HepG2 (cell line): ENCODE measurements at regions of chr11 and their contacts with region 1.

Region 1: DNA sequence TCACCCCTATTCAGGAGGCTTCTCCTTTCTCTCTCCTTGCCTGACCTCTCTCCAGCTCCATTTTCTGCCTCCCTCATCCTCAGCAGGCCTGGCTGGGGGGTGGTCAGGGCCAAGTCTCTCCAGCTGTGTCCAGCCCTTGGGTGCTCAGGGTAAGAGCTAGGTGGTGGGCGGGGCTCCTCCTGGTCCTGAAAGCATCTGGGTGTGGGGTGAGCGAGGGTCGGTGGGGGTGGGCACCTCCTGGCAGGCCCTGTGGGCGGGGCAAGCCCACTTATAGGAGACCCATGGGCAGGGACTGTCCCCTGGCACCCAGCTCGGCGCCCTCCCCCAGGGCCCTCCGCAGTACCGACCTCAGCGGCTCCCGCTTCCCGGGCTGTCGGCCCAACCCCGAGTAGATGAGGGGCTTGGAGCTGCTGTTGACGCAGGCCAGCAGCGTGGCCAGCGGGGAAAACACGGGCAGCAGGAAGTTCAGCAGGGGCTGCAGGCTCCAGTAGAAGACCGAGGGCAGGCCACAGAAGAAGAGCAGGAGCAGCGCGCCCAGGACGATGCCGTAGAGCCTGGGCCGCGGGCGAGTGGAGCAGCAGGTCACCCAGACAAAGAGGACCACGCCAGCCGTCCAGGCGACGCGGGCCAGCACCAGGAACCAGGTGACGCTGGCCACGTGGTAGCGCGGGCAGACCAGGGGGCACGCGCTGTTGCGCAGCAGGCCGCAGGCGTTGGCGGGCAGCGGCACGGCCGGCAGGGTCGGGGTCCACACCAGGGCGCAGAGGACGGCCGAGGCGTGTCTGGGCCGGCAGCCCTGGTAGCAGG is 734 bp downstream of the MRGPRG start:
- DNase-seq: no peak
- ATAC-seq: no peak
- H3K4me3 ChIP-seq: no peak overlapping the region
- H3K27ac ChIP-seq: no peak overlapping the region
- H3K4me1 ChIP-seq: no peaks in the 10 kb centered on the region
- H3K27me3 ChIP-seq: peaks cover 13 to 63% of the 10 kb centered on the region in 2 experiments
- CTCF ChIP-seq: no peak
- EP300 ChIP-seq: no peak
- POLR2A ChIP-seq: no peak
- RAD21 ChIP-seq: no peak

Region 2: GRCh38 chr11:3037040-3037944 is 180.6 kb before region 1 on chr11:
- CTCF ChIA-PET with region 1: interaction called, 3 read pairs
- POLR2A ChIA-PET with region 1: no interaction called
- in situ Hi-C with region 1: loop called (anchors 10 kb)
- intact Hi-C with region 1: no loop called
- DNase-seq: peak; percentile 66
- ATAC-seq: peak; percentile 96
- H3K4me3 ChIP-seq: no peak overlapping the region
- H3K27ac ChIP-seq: no peak overlapping the region
- H3K4me1 ChIP-seq: no peaks in the 10 kb centered on the region
- H3K27me3 ChIP-seq: no peaks in the 10 kb centered on the region
- CTCF ChIP-seq: peak; percentile 85
- EP300 ChIP-seq: no peak
- POLR2A ChIP-seq: no peak
- RAD21 ChIP-seq: peak; percentile 85

Region 3: GRCh38 chr11:3109921-3110706 is 107.8 kb before region 1 on chr11:
- CTCF ChIA-PET with region 1: interaction called, 6 read pairs
- POLR2A ChIA-PET with region 1: no interaction called
- in situ Hi-C with region 1: loop called (anchors 10 kb)
- intact Hi-C with region 1: loop called (anchors 10 kb)
- DNase-seq: peak; percentile 15
- ATAC-seq: peak; percentile 88
- H3K4me3 ChIP-seq: no peak overlapping the region
- H3K27ac ChIP-seq: no peak overlapping the region
- H3K4me1 ChIP-seq: no peaks in the 10 kb centered on the region
- H3K27me3 ChIP-seq: peaks cover 10 to 37% of the 10 kb centered on the region in 2 experiments
- CTCF ChIP-seq: peak; percentile 59
- EP300 ChIP-seq: no peak
- POLR2A ChIP-seq: no peak
- RAD21 ChIP-seq: no peak

Region 4: GRCh38 chr11:3699411-3699810 is 481.5 kb after region 1 on chr11:
- CTCF ChIA-PET with region 1: no interaction called
- POLR2A ChIA-PET with region 1: no interaction called
- in situ Hi-C with region 1: no loop called
- intact Hi-C with region 1: no loop called
- DNase-seq: no peak
- ATAC-seq: no peak
- H3K4me3 ChIP-seq: no peak overlapping the region
- H3K27ac ChIP-seq: no peak overlapping the region
- H3K4me1 ChIP-seq: no peaks in the 10 kb centered on the region
- H3K27me3 ChIP-seq: no peaks in the 10 kb centered on the region
- CTCF ChIP-seq: no peak
- EP300 ChIP-seq: no peak
- POLR2A ChIP-seq: no peak
- RAD21 ChIP-seq: no peak